CD8-positive, alpha-beta T cell (primary cell): ENCODE measurements at regions of chr15 and their contacts with region 1.

Region 1: GRCh38 chr15:42273102-42273899 is at the starts of genes GANC and TMEM87A:
- DNase-seq: peak; percentile 91 to 99 (median 95)
- ATAC-seq: peak; percentile 90
- H3K4me3 ChIP-seq: peak within 1 kb of the TSS; percentile 90 to 93
- H3K4me3 Mint-ChIP-seq: peak within 1 kb of the TSS; percentile 99
- H3K27ac ChIP-seq: peak within 1 kb of the TSS; percentile 95 to 96
- H3K27ac Mint-ChIP-seq: peak within 1 kb of the TSS; percentile 100
- H3K4me1 ChIP-seq: peaks cover 38% of the 10 kb centered on the region
- H3K4me1 Mint-ChIP-seq: peaks cover 61% of the 10 kb centered on the region
- H3K27me3 ChIP-seq: no peaks in the 10 kb centered on the region
- H3K27me3 Mint-ChIP-seq: no peaks in the 10 kb centered on the region
- CTCF ChIP-seq: no peak
- total RNA-seq, gene GANC: 15.5 to 19.3 TPM
- total RNA-seq, gene TMEM87A: 71.0 to 74.5 TPM

Region 2: DNA sequence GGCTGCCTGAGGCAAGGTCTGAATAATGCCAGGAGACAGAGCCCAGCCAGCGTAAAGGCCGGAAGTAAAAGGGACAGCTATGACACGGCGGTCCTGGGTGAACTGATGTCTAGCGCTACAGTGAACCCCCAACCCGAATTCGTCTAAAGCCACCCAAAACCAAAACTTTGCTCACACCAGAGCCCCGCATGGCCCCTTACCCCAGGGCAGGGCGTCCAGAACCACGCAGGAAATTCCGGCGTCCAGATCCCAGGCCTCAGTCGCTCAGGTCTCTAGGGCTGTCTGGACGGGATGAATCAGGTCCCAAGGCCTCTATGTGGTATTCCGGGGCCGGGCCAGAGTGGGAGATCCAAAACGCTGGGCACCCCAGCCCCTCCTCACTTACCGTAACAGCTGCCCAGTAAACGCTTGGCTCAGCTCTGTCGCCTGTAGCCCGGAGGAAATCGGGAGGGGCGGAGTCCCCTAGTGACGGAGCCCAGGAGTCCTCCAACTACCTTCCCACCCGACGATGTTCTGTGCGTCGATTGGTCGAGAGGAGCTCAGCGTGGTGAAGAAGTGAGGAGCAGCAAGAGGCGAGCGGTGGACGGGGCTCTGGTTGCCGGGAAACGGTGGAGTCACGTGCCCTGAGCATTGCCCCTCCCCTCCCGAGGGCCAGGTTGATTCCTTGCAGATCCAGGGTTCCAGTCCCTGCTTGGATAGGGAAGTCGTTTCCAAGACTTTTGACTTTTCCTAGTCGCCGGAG is 1708.5 kb before region 1 on chr15 and contains the start of gene CCDC32:
- CTCF ChIA-PET with region 1: no interaction called
- POLR2A ChIA-PET with region 1: no interaction called
- intact Hi-C with region 1: loop called in 1 of 2 experiments (anchors 10 kb)
- DNase-seq: peak; percentile 84 to 99 (median 94)
- ATAC-seq: peak; percentile 90
- H3K4me3 ChIP-seq: peak within 1 kb of the TSS; percentile 89 to 97
- H3K4me3 Mint-ChIP-seq: peak within 1 kb of the TSS; percentile 95
- H3K27ac ChIP-seq: peak within 1 kb of the TSS; percentile 87 to 97
- H3K27ac Mint-ChIP-seq: peak within 1 kb of the TSS; percentile 97
- H3K4me1 ChIP-seq: peaks cover 11% of the 10 kb centered on the region
- H3K4me1 Mint-ChIP-seq: peaks cover 52% of the 10 kb centered on the region
- H3K27me3 ChIP-seq: no peaks in the 10 kb centered on the region
- H3K27me3 Mint-ChIP-seq: no peaks in the 10 kb centered on the region
- CTCF ChIP-seq: no peak
- total RNA-seq, gene CCDC32: 18.3 to 20.3 TPM

Region 3: GRCh38 chr15:41416742-41417406 is 856.4 kb before region 1 on chr15 and contains the start of gene RTF1:
- CTCF ChIA-PET with region 1: no interaction called
- POLR2A ChIA-PET with region 1: no interaction called
- intact Hi-C with region 1: loop called in 1 of 2 experiments (anchors 5 kb)
- DNase-seq: peak; percentile 94 to 99 (median 98)
- ATAC-seq: peak; percentile 98
- H3K4me3 ChIP-seq: peak within 1 kb of the TSS; percentile 79 to 91
- H3K4me3 Mint-ChIP-seq: peak within 1 kb of the TSS; percentile 93
- H3K27ac ChIP-seq: peak within 1 kb of the TSS; percentile 64 to 76
- H3K27ac Mint-ChIP-seq: peak within 1 kb of the TSS; percentile 94
- H3K4me1 ChIP-seq: peaks cover 30% of the 10 kb centered on the region
- H3K4me1 Mint-ChIP-seq: peaks cover 43% of the 10 kb centered on the region
- H3K27me3 ChIP-seq: no peaks in the 10 kb centered on the region
- H3K27me3 Mint-ChIP-seq: no peaks in the 10 kb centered on the region
- CTCF ChIP-seq: no peak
- total RNA-seq, gene RTF1: 33.2 to 41.6 TPM

Region 4: DNA sequence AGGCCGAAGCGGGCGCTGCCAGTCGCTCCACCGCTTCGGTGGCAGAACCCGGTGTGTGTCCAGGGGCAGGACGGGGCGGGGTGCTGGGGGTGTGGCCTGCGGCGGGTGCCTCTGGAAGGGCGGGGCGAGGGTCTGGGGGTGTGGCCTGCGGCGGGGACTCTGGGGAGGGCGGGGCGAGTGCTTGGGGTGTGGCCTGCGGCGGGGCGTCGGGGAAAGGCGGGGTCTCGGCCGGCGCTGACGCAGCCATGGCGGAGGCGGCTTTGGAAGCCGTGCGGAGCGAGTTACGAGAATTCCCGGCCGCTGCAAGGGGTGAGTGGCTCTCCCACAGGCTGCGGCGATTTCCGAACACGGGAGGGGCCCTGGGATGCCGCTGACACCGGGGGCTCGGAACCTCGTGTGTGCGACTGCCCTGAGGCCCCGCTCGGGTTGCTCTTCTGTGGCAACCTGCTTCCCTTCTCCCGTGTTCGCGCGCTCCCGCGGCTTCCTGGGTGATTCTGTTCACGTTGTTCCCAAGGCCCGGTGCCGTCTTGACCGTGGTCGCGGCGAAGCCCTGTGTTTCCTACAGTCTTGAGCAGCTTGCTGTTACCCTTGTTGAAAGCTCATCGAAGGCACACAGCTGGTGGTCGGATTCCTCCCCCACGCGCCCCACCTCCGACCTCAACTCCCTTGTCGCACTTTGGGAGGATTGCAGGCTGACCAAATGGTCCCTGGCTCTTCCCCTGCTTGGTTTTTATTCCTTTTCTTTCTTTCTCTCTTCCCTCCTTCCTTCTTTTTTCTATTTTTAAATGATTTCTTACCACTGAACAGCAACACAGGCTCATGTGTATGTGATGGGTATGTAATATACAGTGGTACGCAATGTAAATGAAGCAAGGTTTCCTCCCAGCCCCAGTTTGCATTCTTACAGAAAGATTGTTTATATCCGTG is 445.2 kb before region 1 on chr15 and contains the start of gene JMJD7:
- CTCF ChIA-PET with region 1: no interaction called
- POLR2A ChIA-PET with region 1: no interaction called
- intact Hi-C with region 1: loop called in 1 of 2 experiments (anchors 5 kb)
- DNase-seq: peak; percentile 93 to 98 (median 95)
- ATAC-seq: peak; percentile 97
- H3K4me3 ChIP-seq: peak within 1 kb of the TSS; percentile 93 to 95
- H3K4me3 Mint-ChIP-seq: peak within 1 kb of the TSS; percentile 83
- H3K27ac ChIP-seq: peak within 1 kb of the TSS; percentile 74 to 87
- H3K27ac Mint-ChIP-seq: peak within 1 kb of the TSS; percentile 87
- H3K4me1 ChIP-seq: peaks cover 35% of the 10 kb centered on the region
- H3K4me1 Mint-ChIP-seq: peaks cover 44% of the 10 kb centered on the region
- H3K27me3 ChIP-seq: no peaks in the 10 kb centered on the region
- H3K27me3 Mint-ChIP-seq: no peaks in the 10 kb centered on the region
- CTCF ChIP-seq: no peak
- total RNA-seq, gene JMJD7: 27.5 to 38.3 TPM

Region 5: DNA sequence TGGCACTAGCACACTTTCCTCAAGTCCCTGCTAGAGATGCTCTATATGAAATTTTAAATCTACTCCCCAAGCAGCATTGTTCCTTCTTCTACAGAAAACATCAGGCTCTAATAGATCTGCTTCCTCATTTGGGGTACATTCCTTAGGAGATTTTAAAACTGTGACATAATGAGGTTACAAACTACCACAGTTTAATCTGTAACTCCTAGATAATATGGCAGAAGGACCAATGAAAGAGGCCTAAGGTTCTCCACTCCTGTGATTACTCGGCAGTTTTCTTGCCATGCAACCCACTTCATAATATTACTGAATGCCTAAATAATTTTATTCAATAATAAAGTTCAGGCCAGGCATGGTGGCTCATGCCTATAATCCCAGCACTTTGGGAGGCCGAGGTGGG is 201.5 kb after region 1 on chr15:
- CTCF ChIA-PET with region 1: no interaction called
- POLR2A ChIA-PET with region 1: no interaction called
- intact Hi-C with region 1: loop called in 1 of 2 experiments (anchors 1 kb)
- DNase-seq: no peak
- ATAC-seq: no peak
- H3K4me3 ChIP-seq: no peak overlapping the region
- H3K4me3 Mint-ChIP-seq: no peak overlapping the region
- H3K27ac ChIP-seq: no peak overlapping the region
- H3K27ac Mint-ChIP-seq: peak overlapping the region; percentile 37
- H3K4me1 ChIP-seq: no peaks in the 10 kb centered on the region
- H3K4me1 Mint-ChIP-seq: peaks cover 9% of the 10 kb centered on the region
- H3K27me3 ChIP-seq: no peaks in the 10 kb centered on the region
- H3K27me3 Mint-ChIP-seq: no peaks in the 10 kb centered on the region
- CTCF ChIP-seq: no peak

Region 6: DNA sequence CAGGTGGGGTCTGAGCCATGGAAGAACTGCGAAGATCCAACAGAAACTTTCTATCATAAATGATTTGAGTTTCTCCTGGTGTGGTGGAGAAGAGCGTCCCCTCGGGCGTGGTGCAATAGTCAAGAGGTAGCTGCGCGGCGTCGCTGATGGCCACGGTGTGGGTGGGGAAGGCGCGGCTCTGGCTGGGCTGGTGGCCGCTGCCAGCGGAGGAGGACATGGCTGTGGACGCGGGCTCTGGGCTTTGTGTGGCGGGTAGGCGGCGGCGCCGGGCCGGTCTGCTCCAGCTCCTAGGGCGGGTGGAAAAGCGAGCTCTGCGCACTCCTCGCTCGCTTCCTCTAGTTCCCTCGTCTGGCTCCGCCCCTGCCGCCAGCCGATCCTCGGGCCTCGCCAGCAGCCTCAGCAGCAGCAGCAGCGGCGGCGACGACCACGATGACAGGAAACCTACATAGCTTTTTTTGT is 308.0 kb after region 1 on chr15:
- CTCF ChIA-PET with region 1: no interaction called
- POLR2A ChIA-PET with region 1: interaction called, 4 read pairs
- intact Hi-C with region 1: loop called (anchors 2 to 10 kb)
- DNase-seq: peak; percentile 57 to 89 (median 83)
- ATAC-seq: peak; percentile 99
- H3K4me3 ChIP-seq: peak overlapping the region; percentile 56 to 82
- H3K4me3 Mint-ChIP-seq: peak overlapping the region; percentile 87
- H3K27ac ChIP-seq: peak overlapping the region; percentile 77 to 84
- H3K27ac Mint-ChIP-seq: peak overlapping the region; percentile 93
- H3K4me1 ChIP-seq: peaks cover 20% of the 10 kb centered on the region
- H3K4me1 Mint-ChIP-seq: peaks cover 48% of the 10 kb centered on the region
- H3K27me3 ChIP-seq: no peaks in the 10 kb centered on the region
- H3K27me3 Mint-ChIP-seq: no peaks in the 10 kb centered on the region
- CTCF ChIP-seq: no peak

Region 7: GRCh38 chr15:43185157-43186017 is 912.1 kb after region 1 on chr15 and contains the start of gene CCNDBP1:
- CTCF ChIA-PET with region 1: no interaction called
- POLR2A ChIA-PET with region 1: no interaction called
- intact Hi-C with region 1: loop called in 1 of 2 experiments (anchors 10 kb)
- DNase-seq: peak; percentile 73 to 93 (median 86)
- ATAC-seq: peak; percentile 75
- H3K4me3 ChIP-seq: peak within 1 kb of the TSS; percentile 82 to 97
- H3K4me3 Mint-ChIP-seq: peak within 1 kb of the TSS; percentile 97
- H3K27ac ChIP-seq: peak within 1 kb of the TSS; percentile 87 to 91
- H3K27ac Mint-ChIP-seq: peak within 1 kb of the TSS; percentile 98
- H3K4me1 ChIP-seq: peaks cover 18% of the 10 kb centered on the region
- H3K4me1 Mint-ChIP-seq: peaks cover 43% of the 10 kb centered on the region
- H3K27me3 ChIP-seq: no peaks in the 10 kb centered on the region
- H3K27me3 Mint-ChIP-seq: no peaks in the 10 kb centered on the region
- CTCF ChIP-seq: peak; percentile 56
- total RNA-seq, gene CCNDBP1: 80.3 to 81.1 TPM